ENCODE measurements at regions of chr16 and their contacts with region 1.

Region 1: DNA sequence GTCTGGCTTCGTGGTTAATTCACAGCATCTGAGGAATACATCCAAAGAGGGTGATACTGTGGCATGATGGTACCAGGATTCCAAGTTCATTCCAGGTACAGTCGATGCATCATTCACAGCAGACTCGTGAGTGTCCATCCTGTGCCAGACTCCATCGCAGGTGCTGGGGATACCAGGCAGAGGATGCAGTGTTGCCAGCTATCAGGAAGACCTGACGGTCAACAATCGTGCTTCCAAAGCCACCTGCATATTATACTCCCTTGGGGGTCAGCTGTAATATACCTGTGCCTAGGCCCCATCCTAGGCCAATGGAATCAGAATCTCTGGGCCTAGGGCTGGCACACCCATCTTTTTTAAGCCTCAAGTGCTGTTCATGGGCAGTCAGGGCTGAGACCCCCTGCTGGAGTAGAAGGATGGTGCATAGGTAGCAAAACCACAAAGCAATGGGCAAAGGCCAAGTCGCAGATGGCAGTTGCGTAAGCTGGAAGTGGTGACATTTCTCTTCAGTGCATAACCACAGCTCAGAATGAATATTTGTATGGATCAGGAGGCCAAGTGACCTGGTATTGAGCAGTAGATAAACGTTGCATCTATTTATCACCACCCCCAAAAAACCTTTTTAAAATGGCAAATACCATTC is 42.9 kb upstream of the C16orf78 start:
- DNase-seq: no peak
- CTCF ChIP-seq: no peak

Region 2: GRCh38 chr16:47716571-47716970 is 1614.1 kb before region 1 on chr16:
- in situ Hi-C with region 1: no loop called
- DNase-seq: no peak
- CTCF ChIP-seq: no peak

Region 3: GRCh38 chr16:48609652-48610029 is 721.0 kb before region 1 on chr16:
- in situ Hi-C with region 1: no loop called
- DNase-seq: peak; percentile 80
- CTCF ChIP-seq: no peak

Region 4: GRCh38 chr16:48687421-48688038 is 643.2 kb before region 1 on chr16:
- in situ Hi-C with region 1: loop called (anchors 10 kb)
- DNase-seq: peak; percentile 64
- CTCF ChIP-seq: peak; percentile 84

Region 5: DNA sequence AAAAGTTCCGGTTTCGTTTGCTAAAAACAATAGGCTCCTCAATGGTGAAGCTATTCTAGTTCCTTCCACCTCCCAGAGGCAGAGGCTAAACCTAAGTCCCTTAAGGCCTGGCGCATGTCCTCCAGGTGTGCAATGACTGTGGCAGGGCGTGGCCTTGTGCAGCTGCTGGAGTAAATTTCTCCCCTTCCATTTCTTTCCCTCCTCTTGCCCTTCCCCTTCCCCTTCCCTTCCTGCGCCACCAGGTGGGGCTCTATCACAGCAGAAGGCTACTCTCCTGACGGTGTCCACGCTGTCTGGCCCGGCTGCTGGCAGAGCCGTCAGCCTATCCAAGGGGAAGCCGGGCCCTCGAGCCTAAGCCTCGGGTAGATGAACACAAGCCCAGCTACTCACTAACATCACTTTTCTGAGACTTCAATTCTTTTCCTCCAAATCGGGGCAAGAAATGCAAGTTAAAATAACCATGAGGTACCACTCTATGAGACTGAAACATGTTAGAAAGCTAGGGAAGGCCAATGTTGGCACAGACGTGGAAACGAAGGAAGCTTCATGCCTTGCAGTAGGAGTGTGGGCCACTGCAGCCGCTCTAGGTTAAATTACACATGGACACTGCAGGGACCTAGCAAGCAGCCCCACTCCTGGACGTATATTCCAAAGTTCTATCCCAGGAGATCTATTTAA is 77.3 kb after region 1 on chr16:
- in situ Hi-C with region 1: no loop called
- DNase-seq: peak; percentile 71
- CTCF ChIP-seq: peak; percentile 94

Region 6: GRCh38 chr16:49643429-49644144 is 312.9 kb after region 1 on chr16:
- in situ Hi-C with region 1: no loop called
- DNase-seq: no peak
- CTCF ChIP-seq: no peak

Measured in GM13977 (cell line).